SK-N-SH (cell line): ENCODE measurements at regions of chr17 and their contacts with region 1.

Region 1: DNA sequence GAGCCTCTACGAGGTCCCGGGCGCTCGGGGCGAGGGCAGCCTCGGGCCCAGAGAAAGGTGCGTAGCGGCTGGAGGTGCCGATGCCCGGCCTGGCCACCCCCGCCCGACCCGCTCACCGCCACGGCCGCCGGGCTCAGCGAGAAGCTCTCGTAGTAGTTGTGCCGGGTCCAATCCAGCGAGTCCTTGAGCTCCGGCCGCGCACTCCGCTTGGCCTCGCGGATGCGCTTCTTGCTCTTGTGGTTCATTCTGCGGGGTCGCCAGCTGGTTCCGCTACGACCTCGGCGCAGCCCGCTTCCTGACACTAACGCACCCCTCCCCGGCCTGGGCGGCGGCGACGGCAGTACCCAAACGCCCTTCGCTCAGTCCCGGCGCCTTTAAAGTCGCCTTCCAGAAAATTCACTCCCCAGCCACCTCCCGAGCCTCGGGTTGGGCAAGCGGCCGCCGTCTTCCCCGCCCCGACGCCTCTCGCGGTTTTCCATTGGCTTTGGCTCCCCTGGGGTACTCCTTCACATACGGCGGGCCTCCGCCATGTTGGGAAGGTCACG is at the start of gene JMJD6:
- DNase-seq: peak; percentile 99
- H3K4me3 ChIP-seq: peak within 1 kb of the TSS; percentile 74 to 99
- H3K27ac ChIP-seq: peak within 1 kb of the TSS; percentile 94 to 96
- H3K4me1 ChIP-seq: peaks cover 14 to 20% of the 10 kb centered on the region in 2 experiments
- H3K27me3 ChIP-seq: no peaks in the 10 kb centered on the region
- CTCF ChIP-seq: no peak
- EP300 ChIP-seq: no peak
- RAD21 ChIP-seq: no peak
- polyA plus RNA-seq, gene JMJD6: 20.1 and 23.3 TPM in 2 replicates

Region 2: GRCh38 chr17:76737082-76737675 is 10.9 kb after region 1 on chr17 and contains the start of gene SRSF2:
- CTCF ChIA-PET with region 1: interaction called, 34 read pairs
- POLR2A ChIA-PET with region 1: interaction called, 47 read pairs
- DNase-seq: peak; percentile 100
- H3K4me3 ChIP-seq: peak within 1 kb of the TSS; percentile 93 to 100
- H3K27ac ChIP-seq: peak within 1 kb of the TSS; percentile 98 to 100
- H3K4me1 ChIP-seq: peaks cover 34 to 44% of the 10 kb centered on the region in 2 experiments
- H3K27me3 ChIP-seq: no peaks in the 10 kb centered on the region
- CTCF ChIP-seq: no peak
- EP300 ChIP-seq: peak in 1 of 2 experiments; percentile 26; a peak in 1 of 4 replicates
- RAD21 ChIP-seq: no peak
- polyA plus RNA-seq, gene SRSF2: 211 and 271 TPM in 2 replicates

Region 3: GRCh38 chr17:76758570-76758969 is 32.3 kb after region 1 on chr17:
- CTCF ChIA-PET with region 1: no interaction called
- POLR2A ChIA-PET with region 1: no interaction called
- DNase-seq: no peak
- H3K4me3 ChIP-seq: no peak overlapping the region
- H3K27ac ChIP-seq: no peak overlapping the region
- H3K4me1 ChIP-seq: no peaks in the 10 kb centered on the region
- H3K27me3 ChIP-seq: no peaks in the 10 kb centered on the region
- CTCF ChIP-seq: no peak
- EP300 ChIP-seq: no peak
- RAD21 ChIP-seq: no peak

Region 4: GRCh38 chr17:76911299-76912017 is 185.2 kb after region 1 on chr17:
- CTCF ChIA-PET with region 1: no interaction called
- POLR2A ChIA-PET with region 1: no interaction called
- DNase-seq: peak; percentile 69
- H3K4me3 ChIP-seq: no peak overlapping the region
- H3K27ac ChIP-seq: no peak overlapping the region
- H3K4me1 ChIP-seq: peaks cover 0 to 3% of the 10 kb centered on the region in 2 experiments; a peak in 1 of 4 replicates
- H3K27me3 ChIP-seq: no peaks in the 10 kb centered on the region
- CTCF ChIP-seq: no peak
- EP300 ChIP-seq: no peak
- RAD21 ChIP-seq: no peak